ENCODE measurements at regions of chr1 and their contacts with region 1.

Region 1: GRCh38 chr1:158124999-158125398 is 55.7 kb upstream of the CD1D start:
- DNase-seq: peak; percentile 77 to 82 (median 81)
- ATAC-seq: peak; percentile 98
- H3K4me3 ChIP-seq: no peak overlapping the region
- H3K27ac ChIP-seq: no peak overlapping the region
- H3K4me1 ChIP-seq: no peaks in the 10 kb centered on the region; a peak in 1 of 5 replicates
- H3K27me3 ChIP-seq: peaks cover 0 to 13% of the 10 kb centered on the region in 2 experiments; a peak in 1 of 5 replicates
- CTCF ChIP-seq: peak; percentile 84 to 97 (median 87)
- EP300 ChIP-seq: no peak
- POLR2A ChIP-seq: no peak
- RAD21 ChIP-seq: peak; percentile 93 to 95

Region 2: GRCh38 chr1:157170677-157171515 is 954.1 kb before region 1 on chr1:
- CTCF ChIA-PET with region 1: no interaction called
- POLR2A ChIA-PET with region 1: no interaction called
- in situ Hi-C with region 1: loop called (anchors 10 kb)
- intact Hi-C with region 1: no loop called
- DNase-seq: peak; percentile 35 to 71 (median 48)
- ATAC-seq: peak; percentile 62; the same call in 2 of the 3 replicates
- H3K4me3 ChIP-seq: no peak overlapping the region
- H3K27ac ChIP-seq: no peak overlapping the region
- H3K4me1 ChIP-seq: no peaks in the 10 kb centered on the region
- H3K27me3 ChIP-seq: peaks cover 34 to 46% of the 10 kb centered on the region in 2 experiments
- CTCF ChIP-seq: peak; percentile 64 to 76 (median 74)
- EP300 ChIP-seq: no peak
- POLR2A ChIP-seq: no peak
- RAD21 ChIP-seq: peak; percentile 28 to 41; a peak in 3 of 4 replicates

Region 3: DNA sequence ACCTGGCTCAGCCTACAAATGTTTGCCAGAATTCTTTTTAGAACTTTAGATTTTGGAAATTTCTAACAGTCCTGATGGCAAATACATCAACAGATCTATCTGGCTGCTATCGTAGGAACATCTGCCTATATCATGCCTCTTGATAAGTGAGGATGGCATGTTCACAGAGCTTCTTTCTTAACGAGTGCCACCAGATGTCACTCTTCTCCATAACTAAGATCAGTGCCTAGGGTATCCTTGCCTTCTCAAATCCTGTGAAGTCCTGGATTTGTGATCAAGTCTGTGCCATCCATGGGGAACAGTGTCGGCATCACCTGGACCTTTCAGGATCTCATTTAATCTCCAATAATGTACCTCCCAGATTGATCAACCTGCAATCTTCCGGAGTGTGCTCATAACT is 246.9 kb before region 1 on chr1:
- CTCF ChIA-PET with region 1: interaction called, 3 read pairs
- POLR2A ChIA-PET with region 1: no interaction called
- in situ Hi-C with region 1: no loop called
- intact Hi-C with region 1: loop called (anchors 1 kb)
- DNase-seq: peak in 3 of 4 experiments; percentile 8 to 11 (median 11)
- ATAC-seq: peak; percentile 68; the same call in 2 of the 3 replicates
- H3K4me3 ChIP-seq: no peak overlapping the region
- H3K27ac ChIP-seq: no peak overlapping the region
- H3K4me1 ChIP-seq: no peaks in the 10 kb centered on the region
- H3K27me3 ChIP-seq: no peaks in the 10 kb centered on the region
- CTCF ChIP-seq: peak; percentile 15 to 47 (median 41); a peak in 4 of 6 replicates
- EP300 ChIP-seq: no peak
- POLR2A ChIP-seq: no peak
- RAD21 ChIP-seq: peak; percentile 59 to 64

Region 4: GRCh38 chr1:157963713-157964112 is 161.3 kb before region 1 on chr1:
- CTCF ChIA-PET with region 1: interaction called, 13 read pairs
- POLR2A ChIA-PET with region 1: no interaction called
- in situ Hi-C with region 1: loop called (anchors 5 kb)
- intact Hi-C with region 1: loop called (anchors 2 kb)
- DNase-seq: peak; percentile 64 to 73 (median 68)
- ATAC-seq: peak; percentile 95
- H3K4me3 ChIP-seq: no peak overlapping the region
- H3K27ac ChIP-seq: no peak overlapping the region
- H3K4me1 ChIP-seq: no peaks in the 10 kb centered on the region
- H3K27me3 ChIP-seq: peaks cover 0 to 13% of the 10 kb centered on the region in 2 experiments; a peak in 1 of 5 replicates
- CTCF ChIP-seq: peak; percentile 76 to 89 (median 81)
- EP300 ChIP-seq: no peak
- POLR2A ChIP-seq: no peak
- RAD21 ChIP-seq: peak; percentile 84 to 86

Region 5: DNA sequence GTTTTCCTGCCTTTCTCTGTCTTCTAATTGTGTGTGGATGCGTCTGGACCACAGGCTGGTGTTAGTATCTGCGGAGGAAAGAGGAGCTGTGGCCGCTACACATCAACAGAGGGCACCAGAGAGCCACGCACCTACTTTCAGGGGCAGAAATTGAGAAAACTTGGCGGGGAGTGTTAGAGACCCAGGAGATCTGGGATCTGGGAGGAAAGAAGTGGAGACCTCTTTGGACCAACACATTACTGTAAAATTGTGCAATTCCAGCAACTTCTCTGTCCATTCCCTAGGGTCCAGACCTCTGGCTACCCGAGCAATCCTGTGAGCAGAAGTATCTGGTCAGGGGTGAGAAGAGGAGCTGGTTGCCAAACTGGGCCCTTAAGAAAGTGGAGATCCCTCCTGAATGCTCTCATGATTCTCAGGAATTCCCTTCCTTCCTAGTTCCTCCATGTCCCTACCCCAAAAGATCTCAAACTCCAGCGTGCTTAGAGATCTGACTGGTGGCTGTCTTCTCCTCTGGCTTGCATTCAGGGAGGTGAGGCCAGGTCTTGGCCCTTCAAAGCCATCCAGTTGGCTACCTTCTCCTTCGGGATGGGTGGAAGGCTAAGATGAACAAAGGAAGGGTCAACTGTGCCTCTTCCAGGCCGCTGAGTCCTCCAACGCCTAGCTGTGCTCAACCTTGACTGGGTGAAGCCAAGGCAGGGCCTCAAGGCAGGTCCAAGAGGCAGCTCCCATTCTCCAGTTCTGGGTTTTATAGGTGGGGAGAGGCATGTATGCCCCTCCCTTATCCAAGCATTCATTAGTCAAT is 132.8 kb before region 1 on chr1:
- CTCF ChIA-PET with region 1: interaction called, 8 read pairs
- POLR2A ChIA-PET with region 1: no interaction called
- in situ Hi-C with region 1: no loop called
- intact Hi-C with region 1: loop called (anchors 1 kb)
- DNase-seq: peak; percentile 58 to 67 (median 64)
- ATAC-seq: peak; percentile 90
- H3K4me3 ChIP-seq: no peak overlapping the region
- H3K27ac ChIP-seq: no peak overlapping the region
- H3K4me1 ChIP-seq: no peaks in the 10 kb centered on the region; a peak in 1 of 5 replicates
- H3K27me3 ChIP-seq: peaks cover 8 to 24% of the 10 kb centered on the region in 2 experiments; a peak in 3 of 5 replicates
- CTCF ChIP-seq: peak; percentile 81 to 88 (median 86)
- EP300 ChIP-seq: no peak
- POLR2A ChIP-seq: no peak
- RAD21 ChIP-seq: peak; percentile 80 to 87

Region 6: DNA sequence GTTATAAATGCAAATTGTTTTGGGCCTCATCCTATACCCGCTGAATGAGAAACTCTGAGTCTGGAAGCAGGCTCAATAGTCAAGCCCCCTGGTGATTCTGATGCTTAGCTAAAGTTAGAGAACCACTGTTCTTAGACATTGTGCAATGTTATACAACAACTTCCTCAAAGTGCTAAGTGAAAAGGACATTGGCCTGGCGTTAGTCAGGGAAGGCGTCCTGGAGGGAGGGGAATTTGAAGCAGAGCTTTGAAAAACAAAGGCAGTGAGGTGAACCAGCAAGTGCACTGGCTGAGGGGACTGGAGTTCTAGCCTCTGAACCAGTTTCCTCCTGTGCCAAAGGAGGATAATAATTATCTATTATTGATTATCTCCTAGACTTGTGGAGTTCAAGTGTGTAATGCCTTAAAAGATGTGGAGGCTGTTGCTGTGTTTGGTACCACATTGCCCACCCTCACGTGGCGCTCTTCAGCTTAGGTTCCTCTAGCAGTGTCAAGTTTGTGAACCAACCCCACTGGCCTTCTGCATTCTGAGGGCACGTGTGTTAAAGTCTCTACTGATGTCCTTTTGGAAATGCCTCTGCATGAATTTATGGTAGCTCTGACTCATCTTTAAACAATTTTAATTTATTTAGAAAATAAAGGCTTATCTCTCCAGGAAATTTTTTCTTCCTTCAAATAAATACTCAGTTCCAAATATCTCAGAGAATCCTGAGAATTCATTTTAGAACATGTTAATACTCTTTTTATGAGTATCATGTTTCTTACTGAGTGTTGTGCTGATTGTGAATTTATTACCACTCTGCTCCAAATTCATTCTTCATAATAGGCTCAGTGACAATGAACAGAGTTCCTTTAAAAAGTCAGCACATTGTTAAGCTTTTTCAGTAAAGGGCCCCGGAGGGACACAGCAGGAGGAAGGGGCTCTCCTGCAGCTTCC is 61.0 kb after region 1 on chr1:
- CTCF ChIA-PET with region 1: no interaction called
- POLR2A ChIA-PET with region 1: no interaction called
- in situ Hi-C with region 1: no loop called
- intact Hi-C with region 1: no loop called
- DNase-seq: no peak
- ATAC-seq: no peak
- H3K4me3 ChIP-seq: no peak overlapping the region
- H3K27ac ChIP-seq: no peak overlapping the region
- H3K4me1 ChIP-seq: peaks cover 0 to 4% of the 10 kb centered on the region in 2 experiments; a peak in 2 of 5 replicates
- H3K27me3 ChIP-seq: peaks cover 9 to 21% of the 10 kb centered on the region in 2 experiments; a peak in 4 of 5 replicates
- CTCF ChIP-seq: no peak
- EP300 ChIP-seq: no peak
- POLR2A ChIP-seq: no peak
- RAD21 ChIP-seq: no peak

Measured in K562 (cell line).